K562 (cell line): ENCODE measurements at regions of chr10 and their contacts with region 1.

Region 1: DNA sequence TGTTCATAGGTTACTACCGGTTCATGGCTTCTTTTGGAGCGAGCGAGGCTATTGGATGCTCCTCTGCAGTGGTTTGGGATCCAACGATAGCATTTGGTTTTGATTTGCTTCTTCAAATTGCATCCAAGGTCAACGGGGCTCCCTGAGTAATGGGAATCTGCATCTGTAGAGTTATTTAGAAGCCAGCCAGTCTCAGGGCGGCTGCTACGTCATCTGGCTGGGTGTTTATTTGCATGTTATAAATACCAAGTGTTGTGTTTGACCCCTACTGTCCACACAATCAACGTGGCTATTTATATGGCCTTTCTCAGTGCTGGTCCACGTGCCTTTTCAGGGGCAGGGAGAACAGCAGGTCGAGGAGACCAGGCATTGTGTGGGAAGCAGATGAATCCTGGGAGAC is 137.7 kb downstream of the PRPF18 start:
- DNase-seq: no peak
- ATAC-seq: no peak
- H3K4me3 ChIP-seq: no peak overlapping the region
- H3K27ac ChIP-seq: no peak overlapping the region
- H3K4me1 ChIP-seq: no peaks in the 10 kb centered on the region; a peak in 1 of 5 replicates
- H3K27me3 ChIP-seq: peaks cover 35 to 61% of the 10 kb centered on the region in 2 experiments
- CTCF ChIP-seq: no peak
- EP300 ChIP-seq: no peak
- POLR2A ChIP-seq: no peak
- RAD21 ChIP-seq: no peak

Region 2: GRCh38 chr10:13659897-13660550 is 64.5 kb before region 1 on chr10:
- CTCF ChIA-PET with region 1: no interaction called
- POLR2A ChIA-PET with region 1: no interaction called
- in situ Hi-C with region 1: no loop called
- intact Hi-C with region 1: loop called (anchors 5 kb)
- DNase-seq: peak; percentile 67 to 80 (median 79)
- ATAC-seq: peak; percentile 90
- H3K4me3 ChIP-seq: no peak overlapping the region
- H3K27ac ChIP-seq: no peak overlapping the region
- H3K4me1 ChIP-seq: peaks cover 0 to 3% of the 10 kb centered on the region in 2 experiments; a peak in 1 of 5 replicates
- H3K27me3 ChIP-seq: no peaks in the 10 kb centered on the region; a peak in 1 of 5 replicates
- CTCF ChIP-seq: peak; percentile 90 to 91 (median 91)
- EP300 ChIP-seq: no peak
- POLR2A ChIP-seq: no peak
- RAD21 ChIP-seq: peak; percentile 83 to 96